MCF 10A (cell line): ENCODE measurements at regions of chr1 and their contacts with region 1.

Region 1: GRCh38 chr1:44553771-44554170 is 120.5 kb downstream of the TMEM53 start:
- DNase-seq: peak; percentile 79
- H3K4me3 Mint-ChIP-seq: peak overlapping the region; percentile 15
- H3K27ac Mint-ChIP-seq: peak overlapping the region; percentile 93
- H3K4me1 Mint-ChIP-seq: peaks cover 67% of the 10 kb centered on the region
- H3K27me3 Mint-ChIP-seq: no peaks in the 10 kb centered on the region
- CTCF ChIP-seq: no peak

Region 2: GRCh38 chr1:44327679-44328491 is 225.9 kb before region 1 on chr1:
- CTCF ChIA-PET with region 1: no interaction called
- POLR2A ChIA-PET with region 1: interaction called, 66 read pairs
- intact Hi-C with region 1: no loop called
- DNase-seq: peak; percentile 100
- H3K4me3 Mint-ChIP-seq: no peak overlapping the region
- H3K27ac Mint-ChIP-seq: peak overlapping the region; percentile 82
- H3K4me1 Mint-ChIP-seq: peaks cover 61% of the 10 kb centered on the region
- H3K27me3 Mint-ChIP-seq: no peaks in the 10 kb centered on the region
- CTCF ChIP-seq: no peak

Region 3: DNA sequence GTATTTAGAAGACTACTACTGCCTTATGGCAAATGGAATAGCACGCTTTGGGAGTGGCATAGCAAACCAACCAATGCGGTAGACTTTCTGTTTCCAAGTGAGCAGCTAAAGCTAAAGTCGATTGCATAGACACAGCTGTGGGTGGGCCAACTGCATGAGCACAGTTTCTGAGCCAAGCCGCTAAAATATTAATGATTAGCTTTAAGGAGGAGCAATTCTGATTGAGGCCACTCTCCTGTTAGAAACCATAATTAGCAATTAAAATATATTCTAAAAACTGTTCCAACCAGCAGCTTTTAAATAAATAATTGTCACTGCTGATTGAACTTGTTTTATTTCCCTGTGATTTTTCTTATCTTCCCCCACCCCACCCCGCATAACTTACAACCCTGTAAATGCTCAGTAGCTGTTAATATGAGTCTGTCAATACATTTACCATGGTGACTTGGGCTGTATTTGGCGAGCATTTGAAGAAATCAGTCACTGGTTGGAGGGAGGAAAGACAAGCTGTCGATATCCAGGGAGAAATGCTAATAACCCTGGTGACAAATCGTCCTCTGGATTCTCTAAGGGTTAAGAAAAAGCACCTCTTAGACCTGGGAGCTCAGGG is 116.6 kb before region 1 on chr1:
- CTCF ChIA-PET with region 1: interaction called, 3 read pairs
- POLR2A ChIA-PET with region 1: interaction called, 11 read pairs
- intact Hi-C with region 1: no loop called
- DNase-seq: no peak
- H3K4me3 Mint-ChIP-seq: no peak overlapping the region
- H3K27ac Mint-ChIP-seq: no peak overlapping the region
- H3K4me1 Mint-ChIP-seq: no peaks in the 10 kb centered on the region
- H3K27me3 Mint-ChIP-seq: no peaks in the 10 kb centered on the region
- CTCF ChIP-seq: no peak

Region 4: DNA sequence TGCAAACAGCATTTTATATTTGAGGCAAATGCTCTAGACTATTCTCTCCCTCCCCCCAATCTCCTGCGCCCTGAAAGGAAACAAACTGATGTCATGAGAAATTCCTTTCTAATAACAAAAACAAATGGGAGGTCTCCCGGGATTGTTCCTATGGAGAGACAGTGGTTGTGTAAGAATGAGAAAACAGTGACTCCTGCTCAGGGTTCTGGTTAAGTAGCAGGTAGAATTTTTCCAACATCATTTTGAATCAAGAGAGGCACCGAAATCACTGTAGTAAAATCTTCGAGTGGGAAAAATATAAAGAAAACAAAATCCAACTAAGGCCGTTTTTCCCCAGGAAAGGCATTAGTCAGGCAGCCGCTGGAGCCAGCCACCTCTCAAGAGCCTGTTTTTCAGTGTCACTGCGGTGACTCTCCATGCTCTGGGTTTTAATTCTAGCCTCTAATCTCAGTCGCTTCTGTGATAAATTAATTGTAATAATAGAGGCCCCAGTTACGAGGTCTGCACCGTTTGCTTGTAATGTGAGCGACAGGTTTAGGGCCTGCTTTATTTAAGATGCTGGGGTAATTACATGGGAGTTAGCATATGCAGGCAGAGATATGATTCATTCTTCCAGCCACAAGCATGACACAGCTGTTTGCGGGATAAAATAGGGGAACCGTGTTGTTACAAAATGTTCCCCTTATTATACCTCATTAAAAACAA is 68.4 kb before region 1 on chr1:
- CTCF ChIA-PET with region 1: interaction called, 9 read pairs
- POLR2A ChIA-PET with region 1: interaction called, 22 read pairs
- intact Hi-C with region 1: loop called (anchors 2 kb)
- DNase-seq: peak; percentile 83
- H3K4me3 Mint-ChIP-seq: peak overlapping the region; percentile 28
- H3K27ac Mint-ChIP-seq: peak overlapping the region; percentile 86
- H3K4me1 Mint-ChIP-seq: peaks cover 40% of the 10 kb centered on the region
- H3K27me3 Mint-ChIP-seq: no peaks in the 10 kb centered on the region
- CTCF ChIP-seq: no peak

Region 5: DNA sequence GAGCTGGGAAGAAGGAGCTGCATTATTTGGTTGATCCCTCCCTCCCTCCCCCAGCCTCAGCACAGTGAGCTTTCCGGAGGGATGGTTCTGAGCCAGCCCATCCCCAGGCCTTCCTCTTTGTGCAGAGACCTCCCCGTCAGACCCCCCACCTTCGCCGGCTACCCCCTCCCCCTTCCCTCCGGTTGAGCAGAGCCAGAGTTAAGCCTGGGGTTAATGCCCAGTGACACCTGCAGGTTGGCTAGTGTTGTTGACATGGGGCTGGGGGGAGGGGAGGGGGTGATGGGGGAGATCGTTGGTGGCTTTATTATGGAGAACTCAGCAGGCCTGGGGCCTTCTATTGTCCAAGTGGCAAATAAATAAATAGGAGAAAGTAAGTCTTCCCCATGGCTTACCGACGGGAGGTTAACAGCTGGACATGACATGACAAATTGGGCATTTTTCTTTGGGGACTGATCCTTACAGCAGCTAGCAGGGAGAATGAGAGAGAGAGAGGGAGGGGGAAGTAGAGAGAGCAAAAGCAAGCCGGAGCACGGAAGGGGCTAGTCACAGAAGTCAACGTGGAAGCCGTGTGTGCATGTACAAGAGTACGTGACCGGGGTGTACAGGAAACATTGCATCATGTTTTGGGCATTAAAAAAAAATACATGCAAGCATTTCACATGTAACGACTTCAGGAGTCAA is 10.6 kb before region 1 on chr1:
- CTCF ChIA-PET with region 1: interaction called, 7 read pairs
- POLR2A ChIA-PET with region 1: interaction called, 19 read pairs
- intact Hi-C with region 1: no loop called
- DNase-seq: no peak
- H3K4me3 Mint-ChIP-seq: no peak overlapping the region
- H3K27ac Mint-ChIP-seq: no peak overlapping the region
- H3K4me1 Mint-ChIP-seq: peaks cover 29% of the 10 kb centered on the region
- H3K27me3 Mint-ChIP-seq: no peaks in the 10 kb centered on the region
- CTCF ChIP-seq: no peak

Region 6: DNA sequence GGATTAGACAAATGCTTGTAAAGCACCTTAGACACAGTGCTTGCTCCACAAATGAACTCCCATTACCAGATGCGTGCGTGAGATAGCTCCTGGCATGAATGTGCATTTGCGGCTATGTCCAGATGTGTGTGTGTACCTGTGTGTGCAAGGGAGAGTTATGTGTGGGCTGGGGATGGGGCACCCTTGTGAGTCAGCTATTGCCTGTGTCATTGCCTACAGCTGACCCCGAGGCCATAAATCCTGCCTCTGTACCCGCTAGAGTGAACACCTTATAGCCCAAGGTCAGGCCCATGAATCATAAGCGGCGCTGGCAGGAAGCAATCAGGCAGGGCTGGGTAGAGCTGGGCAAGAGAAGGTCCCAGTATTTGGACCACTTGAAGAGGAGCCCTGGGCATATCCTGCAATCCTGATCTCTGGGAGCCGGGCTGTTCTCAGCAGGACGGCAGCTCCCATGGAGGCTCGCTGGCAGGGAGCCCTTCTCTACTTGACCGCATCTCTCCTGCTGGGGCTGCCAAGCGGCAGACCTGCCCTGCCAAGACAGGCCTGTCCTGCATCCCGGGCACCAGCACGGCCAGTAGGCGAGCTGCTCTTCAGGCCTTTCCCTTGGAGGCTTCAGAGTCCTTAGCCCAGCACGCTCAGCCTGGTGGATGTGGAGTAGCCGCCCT is 34.2 kb after region 1 on chr1:
- CTCF ChIA-PET with region 1: interaction called, 4 read pairs
- POLR2A ChIA-PET with region 1: interaction called, 44 read pairs
- intact Hi-C with region 1: no loop called
- DNase-seq: no peak
- H3K4me3 Mint-ChIP-seq: no peak overlapping the region
- H3K27ac Mint-ChIP-seq: peak overlapping the region; percentile 12
- H3K4me1 Mint-ChIP-seq: peaks cover 13% of the 10 kb centered on the region
- H3K27me3 Mint-ChIP-seq: no peaks in the 10 kb centered on the region
- CTCF ChIP-seq: no peak

Region 7: GRCh38 chr1:44631647-44632539 is 78.1 kb after region 1 on chr1:
- CTCF ChIA-PET with region 1: no interaction called
- POLR2A ChIA-PET with region 1: interaction called, 17 read pairs
- intact Hi-C with region 1: no loop called
- DNase-seq: peak; percentile 87
- H3K4me3 Mint-ChIP-seq: peak overlapping the region; percentile 79
- H3K27ac Mint-ChIP-seq: peak overlapping the region; percentile 98
- H3K4me1 Mint-ChIP-seq: peaks cover 20% of the 10 kb centered on the region
- H3K27me3 Mint-ChIP-seq: no peaks in the 10 kb centered on the region
- CTCF ChIP-seq: no peak